Mammary epithelial cell (primary cell): ENCODE measurements at regions of chr15 and their contacts with region 1.

Region 1: DNA sequence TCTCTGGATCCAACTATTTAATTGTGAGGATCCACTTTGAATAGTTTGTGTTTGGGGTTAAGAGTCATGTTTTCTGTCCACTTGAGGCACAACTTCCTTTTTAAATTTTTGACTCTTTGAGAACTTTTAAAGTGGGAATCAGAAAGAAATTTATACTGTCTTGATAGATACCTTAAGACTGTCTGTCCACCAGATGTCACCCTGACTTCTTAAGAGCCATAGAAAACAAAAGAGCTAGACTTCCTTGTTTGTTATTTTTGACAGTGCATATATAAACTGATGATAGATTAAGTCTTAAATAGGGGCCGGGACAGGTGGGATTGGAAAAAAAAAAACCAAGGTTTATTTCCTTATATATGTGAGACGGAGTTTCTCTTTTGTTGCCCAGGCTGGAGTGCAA is 52.1 kb upstream of the WDR72 start:
- DNase-seq: no peak
- H3K4me3 ChIP-seq: no peak overlapping the region
- H3K27ac ChIP-seq: no peak overlapping the region
- H3K4me1 ChIP-seq: no peaks in the 10 kb centered on the region
- H3K27me3 ChIP-seq: no peaks in the 10 kb centered on the region
- CTCF ChIP-seq: peak; percentile 9 to 43

Region 2: GRCh38 chr15:53453253-53454105 is 358.1 kb before region 1 on chr15:
- CTCF ChIA-PET with region 1: no interaction called
- dilution Hi-C with region 1: no loop called
- in situ Hi-C with region 1: no loop called
- intact Hi-C with region 1: no loop called
- DNase-seq: no peak
- H3K4me3 ChIP-seq: no peak overlapping the region
- H3K27ac ChIP-seq: no peak overlapping the region
- H3K4me1 ChIP-seq: no peaks in the 10 kb centered on the region
- H3K27me3 ChIP-seq: no peaks in the 10 kb centered on the region
- CTCF ChIP-seq: no peak

Region 3: GRCh38 chr15:53880357-53880756 is 68.8 kb after region 1 on chr15:
- CTCF ChIA-PET with region 1: no interaction called
- dilution Hi-C with region 1: no loop called
- in situ Hi-C with region 1: no loop called
- intact Hi-C with region 1: no loop called
- DNase-seq: no peak
- H3K4me3 ChIP-seq: no peak overlapping the region
- H3K27ac ChIP-seq: no peak overlapping the region
- H3K4me1 ChIP-seq: peaks cover 21% of the 10 kb centered on the region
- H3K27me3 ChIP-seq: no peaks in the 10 kb centered on the region
- CTCF ChIP-seq: no peak

Region 4: GRCh38 chr15:53962332-53963241 is 151.1 kb after region 1 on chr15:
- CTCF ChIA-PET with region 1: no interaction called
- dilution Hi-C with region 1: no loop called
- in situ Hi-C with region 1: no loop called
- intact Hi-C with region 1: loop called (anchors 5 kb)
- DNase-seq: no peak
- H3K4me3 ChIP-seq: no peak overlapping the region
- H3K27ac ChIP-seq: no peak overlapping the region
- H3K4me1 ChIP-seq: no peaks in the 10 kb centered on the region
- H3K27me3 ChIP-seq: peaks cover 4% of the 10 kb centered on the region
- CTCF ChIP-seq: peak; percentile 74